ENCODE measurements at regions of chr18 and their contacts with region 1.

Region 1: DNA sequence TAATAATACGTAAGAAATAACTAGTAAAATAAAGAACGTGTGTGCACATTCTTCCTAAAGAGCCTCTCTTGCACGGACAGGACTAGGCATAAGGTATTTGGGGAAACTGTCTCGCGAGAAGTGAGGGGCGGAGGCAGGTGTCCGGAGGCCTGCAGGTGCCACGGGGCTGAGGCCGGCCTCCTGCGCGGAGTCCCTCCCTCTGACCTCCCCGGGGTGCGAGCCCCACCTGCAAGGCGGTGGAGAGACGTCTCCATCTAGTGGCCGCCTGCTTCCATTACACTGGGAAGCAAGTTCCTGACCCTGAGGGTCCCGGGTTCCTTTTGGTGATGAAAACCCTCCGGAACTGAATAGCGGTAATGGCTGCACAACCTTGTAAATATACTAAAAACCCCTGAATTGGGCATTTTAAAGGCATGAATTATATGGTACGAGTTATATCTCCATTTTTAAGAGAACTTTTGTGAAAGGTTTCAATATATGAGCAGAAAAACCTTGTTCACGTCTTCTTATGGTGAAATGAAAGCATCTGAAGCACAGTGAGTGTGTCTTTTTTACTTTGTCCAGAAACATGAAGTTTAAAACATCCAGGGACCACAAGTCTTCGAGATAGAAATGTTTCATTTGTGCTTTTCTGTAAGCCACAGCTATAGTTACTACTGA is 35.5 kb upstream of the CTDP1 start:
- DNase-seq: peak in 2 of 3 donors; percentile 50 to 71
- ATAC-seq: peak; percentile 90
- H3K4me3 ChIP-seq: no peak overlapping the region
- H3K4me1 ChIP-seq: no peaks in the 10 kb centered on the region
- CTCF ChIP-seq: peak; percentile 88

Region 2: GRCh38 chr18:79378542-79379250 is 265.4 kb before region 1 on chr18:
- intact Hi-C with region 1: loop called (anchors 5 kb)
- DNase-seq: peak; percentile 84 to 89 (median 85)
- ATAC-seq: peak; percentile 90
- H3K4me3 ChIP-seq: no peak overlapping the region
- H3K4me1 ChIP-seq: no peaks in the 10 kb centered on the region
- CTCF ChIP-seq: peak; percentile 95

Region 3: GRCh38 chr18:79528846-79529245 is 115.3 kb before region 1 on chr18:
- intact Hi-C with region 1: loop called in 1 of 2 experiments (anchors 10 kb)
- DNase-seq: peak; percentile 40 to 80 (median 59)
- ATAC-seq: peak; percentile 61
- H3K4me3 ChIP-seq: no peak overlapping the region
- H3K4me1 ChIP-seq: no peaks in the 10 kb centered on the region
- CTCF ChIP-seq: peak; percentile 51

Measured in mucosa of descending colon (tissue), 3 donors.